Esophagus muscularis mucosa (tissue), 4 donors: ENCODE measurements at regions of chr2 and their contacts with region 1.

Region 1: GRCh38 chr2:101823347-101823791 is 125.9 kb downstream of the MAP4K4 start:
- DNase-seq: no peak
- H3K4me3 ChIP-seq: no peak overlapping the region
- H3K27ac ChIP-seq: no peak overlapping the region
- H3K4me1 ChIP-seq: peaks cover 44 to 61% (median 49%) of the 10 kb centered on the region in 4 donors
- H3K27me3 ChIP-seq: no peaks in the 10 kb centered on the region
- CTCF ChIP-seq: peak; percentile 55 to 76 (median 68)
- EP300 ChIP-seq: no peak
- POLR2A ChIP-seq: no peak

Region 2: GRCh38 chr2:101518578-101519492 is 304.5 kb before region 1 on chr2:
- intact Hi-C with region 1: loop called (anchors 10 kb)
- DNase-seq: peak; percentile 85
- H3K4me3 ChIP-seq: no peak overlapping the region
- H3K27ac ChIP-seq: peak overlapping the region in 2 of 4 donors; percentile 15 to 52
- H3K4me1 ChIP-seq: peaks cover 13 to 42% (median 33%) of the 10 kb centered on the region in 4 donors
- H3K27me3 ChIP-seq: no peaks in the 10 kb centered on the region
- CTCF ChIP-seq: peak; percentile 15 to 49 (median 34)
- EP300 ChIP-seq: no peak
- POLR2A ChIP-seq: no peak

Region 3: GRCh38 chr2:101697124-101698013 is 126.0 kb before region 1 on chr2 and contains the start of gene MAP4K4:
- intact Hi-C with region 1: loop called (anchors 2 kb)
- DNase-seq: peak; percentile 96
- H3K4me3 ChIP-seq: peak within 1 kb of the TSS; percentile 72 to 87 (median 80)
- H3K27ac ChIP-seq: peak within 1 kb of the TSS; percentile 85 to 92 (median 90)
- H3K4me1 ChIP-seq: peaks cover 19 to 51% (median 42%) of the 10 kb centered on the region in 4 donors
- H3K27me3 ChIP-seq: no peaks in the 10 kb centered on the region
- CTCF ChIP-seq: peak in 1 of 3 experiments; percentile 33
- EP300 ChIP-seq: no peak
- POLR2A ChIP-seq: no peak
- total RNA-seq, gene MAP4K4: 37.8 to 59.0 (median 51.7) TPM

Region 4: GRCh38 chr2:102187496-102188150 is 364.3 kb after region 1 on chr2:
- intact Hi-C with region 1: no loop called
- DNase-seq: no peak
- H3K4me3 ChIP-seq: peak overlapping the region; percentile 56 to 61 (median 58)
- H3K27ac ChIP-seq: peak overlapping the region; percentile 42 to 48 (median 46)
- H3K4me1 ChIP-seq: peaks cover 6 to 16% (median 14%) of the 10 kb centered on the region in 4 donors
- H3K27me3 ChIP-seq: peaks cover 0 to 12% (median 0%) of the 10 kb centered on the region in 4 donors
- CTCF ChIP-seq: peak; percentile 15 to 44 (median 16)
- EP300 ChIP-seq: no peak
- POLR2A ChIP-seq: no peak